ENCODE measurements at regions of chr12 and their contacts with region 1.

Region 1: DNA sequence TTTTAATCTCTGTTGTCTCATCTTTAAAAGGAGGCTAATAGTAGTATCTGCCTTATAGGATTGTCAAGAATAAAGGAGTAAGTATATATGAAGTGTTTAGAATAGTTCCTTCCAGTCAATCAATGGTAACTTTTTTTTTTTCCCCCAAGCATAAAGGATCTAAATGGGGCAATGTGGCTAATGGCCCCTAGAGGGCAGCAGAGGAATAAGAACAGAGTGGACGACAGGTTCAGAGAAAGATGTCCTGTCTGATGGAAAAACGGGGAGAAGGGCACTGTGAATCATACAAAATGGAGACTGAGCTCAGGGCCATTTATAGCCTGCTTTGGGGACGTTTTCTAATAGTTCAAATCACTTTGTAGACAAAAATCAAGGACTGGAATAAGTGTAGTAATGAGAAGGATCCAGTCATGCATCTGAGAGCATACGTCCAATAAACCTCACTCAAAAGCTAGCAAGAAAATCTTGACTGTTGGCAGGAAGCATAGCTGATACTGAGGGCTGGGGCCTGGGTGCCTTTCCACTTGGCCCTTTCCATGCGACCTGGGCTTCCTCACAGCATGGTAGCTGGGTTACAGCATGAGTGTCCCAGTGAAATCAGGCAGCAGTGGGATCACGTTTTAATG is 51.3 kb downstream of the IFNG-AS1 start:
- DNase-seq: peak; percentile 65
- ATAC-seq: peak; percentile 95
- H3K4me3 Mint-ChIP-seq: no peak overlapping the region
- H3K27ac Mint-ChIP-seq: no peak overlapping the region
- H3K4me1 Mint-ChIP-seq: peaks cover 4% of the 10 kb centered on the region; the same call in 1 of the 2 replicates
- H3K27me3 Mint-ChIP-seq: no peaks in the 10 kb centered on the region
- CTCF ChIP-seq: peak; percentile 72

Region 2: GRCh38 chr12:68056300-68056699 is 15.7 kb after region 1 on chr12:
- CTCF ChIA-PET with region 1: no interaction called
- POLR2A ChIA-PET with region 1: no interaction called
- DNase-seq: no peak
- ATAC-seq: no peak
- H3K4me3 Mint-ChIP-seq: no peak overlapping the region
- H3K27ac Mint-ChIP-seq: no peak overlapping the region
- H3K4me1 Mint-ChIP-seq: no peaks in the 10 kb centered on the region
- H3K27me3 Mint-ChIP-seq: peaks cover 1% of the 10 kb centered on the region; the same call in 1 of the 2 replicates
- CTCF ChIP-seq: no peak

Region 3: GRCh38 chr12:68102163-68102562 is 61.6 kb after region 1 on chr12:
- CTCF ChIA-PET with region 1: no interaction called
- POLR2A ChIA-PET with region 1: no interaction called
- DNase-seq: no peak
- ATAC-seq: no peak
- H3K4me3 Mint-ChIP-seq: no peak overlapping the region
- H3K27ac Mint-ChIP-seq: no peak overlapping the region
- H3K4me1 Mint-ChIP-seq: peaks cover 12% of the 10 kb centered on the region
- H3K27me3 Mint-ChIP-seq: no peaks in the 10 kb centered on the region
- CTCF ChIP-seq: no peak

Region 4: GRCh38 chr12:68317047-68317667 is 276.6 kb after region 1 on chr12:
- CTCF ChIA-PET with region 1: interaction called, 12 read pairs
- POLR2A ChIA-PET with region 1: no interaction called
- DNase-seq: no peak
- ATAC-seq: no peak
- H3K4me3 Mint-ChIP-seq: no peak overlapping the region
- H3K27ac Mint-ChIP-seq: no peak overlapping the region
- H3K4me1 Mint-ChIP-seq: no peaks in the 10 kb centered on the region
- H3K27me3 Mint-ChIP-seq: no peaks in the 10 kb centered on the region
- CTCF ChIP-seq: peak; percentile 60